Activated T-helper 1 cell treated with anti-CD3 and anti-CD28 coated beads, Interleukin-12 subunit alpha, Interleukin-12 subunit beta, Interleukin-2, Interleukin-4 antibody, amounts not matched to agents 30 ng/mL and 10 ng/mL and 1 ng/mL, durations not matched to agents 14 hours and 24 hours and 36 hours (primary cell): ENCODE measurements at regions of chr7 and their contacts with region 1.

Region 1: DNA sequence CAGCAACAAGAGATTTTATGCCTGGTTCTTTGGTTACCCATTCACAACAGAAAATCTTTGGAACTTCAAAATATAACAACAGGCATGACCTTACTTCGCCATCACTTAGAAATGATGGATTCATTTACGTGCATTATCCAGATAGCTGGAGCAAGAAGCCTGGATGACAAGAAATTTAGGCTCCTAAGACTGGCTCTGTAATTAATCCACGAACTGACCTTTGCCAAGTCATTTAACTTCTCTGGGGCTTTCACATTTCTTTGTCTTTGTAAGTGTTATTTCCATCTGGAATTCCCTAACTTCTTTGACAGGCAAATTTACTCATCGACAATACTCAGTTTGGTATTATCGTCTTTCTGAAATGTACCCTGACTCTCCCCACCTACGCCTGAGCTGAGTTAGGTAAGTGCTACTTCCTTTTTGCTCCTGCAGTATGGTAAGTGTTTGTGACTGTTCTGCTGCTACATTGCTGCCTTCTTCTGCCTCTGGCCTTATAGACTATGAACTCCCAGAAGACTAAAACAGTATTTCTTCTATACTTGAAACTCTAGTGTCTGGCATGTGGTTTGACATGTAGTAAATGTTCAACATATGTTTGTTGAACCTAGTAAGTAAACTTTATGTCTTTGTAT is 5.5 kb upstream of the MDFIC start:
- DNase-seq: no peak
- H3K4me3 Mint-ChIP-seq: peak overlapping the region; percentile 70
- H3K27ac Mint-ChIP-seq: peak overlapping the region; percentile 98
- H3K4me1 Mint-ChIP-seq: peaks cover 61% of the 10 kb centered on the region
- H3K27me3 Mint-ChIP-seq: no peaks in the 10 kb centered on the region

Region 2: DNA sequence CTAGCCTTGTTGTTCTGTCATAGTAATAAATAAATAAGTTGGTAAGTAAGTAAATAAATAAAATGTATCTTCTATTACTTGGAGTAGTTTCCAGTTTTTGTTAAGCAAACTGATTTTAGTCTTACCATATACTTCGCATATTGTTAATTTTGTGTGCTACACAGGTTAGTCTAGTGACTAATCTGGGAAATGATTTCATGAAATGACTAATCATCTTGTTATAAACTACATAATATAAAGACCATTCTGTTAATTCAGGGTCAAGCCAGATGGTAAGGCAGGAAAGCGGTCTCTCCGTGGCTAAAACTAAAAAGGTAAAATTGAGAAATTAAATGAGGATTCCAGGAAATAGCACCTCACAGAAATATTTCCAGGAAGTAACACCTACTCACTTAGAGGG is 560.2 kb before region 1 on chr7:
- intact Hi-C with region 1: no loop called
- DNase-seq: no peak
- H3K4me3 Mint-ChIP-seq: no peak overlapping the region
- H3K27ac Mint-ChIP-seq: no peak overlapping the region
- H3K4me1 Mint-ChIP-seq: no peaks in the 10 kb centered on the region
- H3K27me3 Mint-ChIP-seq: no peaks in the 10 kb centered on the region

Region 3: GRCh38 chr7:114789871-114790311 is 126.5 kb before region 1 on chr7:
- intact Hi-C with region 1: loop called (anchors 1 kb)
- DNase-seq: no peak
- H3K4me3 Mint-ChIP-seq: no peak overlapping the region
- H3K27ac Mint-ChIP-seq: peak overlapping the region; percentile 65
- H3K4me1 Mint-ChIP-seq: peaks cover 42% of the 10 kb centered on the region
- H3K27me3 Mint-ChIP-seq: no peaks in the 10 kb centered on the region

Region 4: GRCh38 chr7:114799628-114800028 is 116.7 kb before region 1 on chr7:
- intact Hi-C with region 1: loop called (anchors 1 kb)
- DNase-seq: no peak
- H3K4me3 Mint-ChIP-seq: no peak overlapping the region
- H3K27ac Mint-ChIP-seq: peak overlapping the region; percentile 94
- H3K4me1 Mint-ChIP-seq: peaks cover 48% of the 10 kb centered on the region
- H3K27me3 Mint-ChIP-seq: no peaks in the 10 kb centered on the region

Region 5: DNA sequence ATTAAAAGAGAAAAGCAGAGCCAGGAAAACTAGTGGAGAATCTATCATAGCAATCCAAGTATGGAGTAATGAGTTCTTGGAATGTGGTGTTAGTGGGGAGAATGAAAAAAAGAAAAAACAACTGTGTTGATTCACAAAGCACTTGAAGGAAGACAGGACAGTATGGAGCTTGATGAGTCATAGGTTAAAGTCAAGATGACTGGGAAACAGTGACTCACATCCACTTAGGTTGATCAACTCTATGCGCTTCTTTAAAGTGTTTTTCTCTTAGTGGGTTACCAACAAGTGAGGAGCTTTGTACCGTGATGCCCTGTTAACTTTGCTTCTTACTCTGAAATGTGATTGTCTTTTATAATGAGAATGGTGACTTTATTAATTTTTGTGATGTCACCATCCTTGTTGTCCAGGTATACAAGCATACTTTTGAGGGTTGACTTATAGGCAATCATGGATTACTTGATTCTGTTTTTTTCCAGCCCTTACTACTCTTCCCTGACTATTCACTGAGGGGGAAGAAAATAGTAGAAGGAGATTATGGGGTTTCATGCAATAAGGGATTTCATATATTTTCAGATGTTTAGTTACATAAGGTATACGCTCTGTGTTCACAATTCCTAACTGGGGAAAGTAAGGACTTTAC is 26.6 kb before region 1 on chr7:
- intact Hi-C with region 1: loop called (anchors 1 kb)
- DNase-seq: peak; percentile 6
- H3K4me3 Mint-ChIP-seq: peak overlapping the region; percentile 15
- H3K27ac Mint-ChIP-seq: peak overlapping the region; percentile 89
- H3K4me1 Mint-ChIP-seq: peaks cover 55% of the 10 kb centered on the region
- H3K27me3 Mint-ChIP-seq: no peaks in the 10 kb centered on the region

Region 6: GRCh38 chr7:115230882-115231571 is 314.6 kb after region 1 on chr7:
- intact Hi-C with region 1: loop called (anchors 5 kb)
- DNase-seq: no peak
- H3K4me3 Mint-ChIP-seq: no peak overlapping the region
- H3K27ac Mint-ChIP-seq: no peak overlapping the region
- H3K4me1 Mint-ChIP-seq: peaks cover 8% of the 10 kb centered on the region
- H3K27me3 Mint-ChIP-seq: no peaks in the 10 kb centered on the region